Right ventricle myocardium inferior (tissue), 1 donor: ENCODE measurements at regions of chr13 and their contacts with region 1.

Region 1: GRCh38 chr13:78750735-78751134 is 91.8 kb upstream of the OBI1 start:
- DNase-seq: no peak
- ATAC-seq: no peak

Region 2: GRCh38 chr13:78420814-78421213 is 329.9 kb before region 1 on chr13:
- intact Hi-C with region 1: loop called (anchors 5 kb)
- DNase-seq: peak; percentile 69
- ATAC-seq: peak; percentile 90

Region 3: GRCh38 chr13:78827471-78827870 is 76.7 kb after region 1 on chr13:
- intact Hi-C with region 1: no loop called
- DNase-seq: no peak
- ATAC-seq: no peak